Body of pancreas (tissue), 4 donors: ENCODE measurements at regions of chr11 and their contacts with region 1.

Region 1: DNA sequence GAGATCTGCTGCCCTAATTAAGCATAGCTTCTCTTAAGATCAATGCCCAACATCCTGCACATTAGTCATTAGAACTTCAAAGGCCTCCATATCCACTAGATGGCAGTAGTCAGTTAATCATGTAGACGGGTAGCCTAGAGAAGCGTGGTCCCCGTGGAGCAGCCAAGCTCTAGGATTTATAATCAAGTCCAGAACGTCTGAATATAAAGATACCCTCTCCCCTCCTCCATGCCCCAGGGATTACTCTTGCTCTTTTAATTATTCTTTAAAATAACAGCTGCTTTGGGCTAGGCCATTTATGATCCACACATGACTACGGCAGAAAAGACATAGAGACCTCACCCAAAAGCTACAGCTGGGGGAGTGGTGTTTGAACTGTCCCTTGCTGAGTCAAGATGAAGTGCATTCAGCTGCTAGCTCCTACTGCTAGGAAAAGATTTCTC is 327.6 kb upstream of the PLET1 start:
- DNase-seq: peak; percentile 49 to 76 (median 66)
- ATAC-seq: peak; percentile 92
- H3K4me3 ChIP-seq: no peak overlapping the region
- H3K27ac ChIP-seq: no peak overlapping the region
- H3K4me1 ChIP-seq: no peaks in the 10 kb centered on the region
- H3K27me3 ChIP-seq: no peaks in the 10 kb centered on the region
- CTCF ChIP-seq: peak; percentile 40 to 76 (median 68)
- POLR2A ChIP-seq: no peak

Region 2: DNA sequence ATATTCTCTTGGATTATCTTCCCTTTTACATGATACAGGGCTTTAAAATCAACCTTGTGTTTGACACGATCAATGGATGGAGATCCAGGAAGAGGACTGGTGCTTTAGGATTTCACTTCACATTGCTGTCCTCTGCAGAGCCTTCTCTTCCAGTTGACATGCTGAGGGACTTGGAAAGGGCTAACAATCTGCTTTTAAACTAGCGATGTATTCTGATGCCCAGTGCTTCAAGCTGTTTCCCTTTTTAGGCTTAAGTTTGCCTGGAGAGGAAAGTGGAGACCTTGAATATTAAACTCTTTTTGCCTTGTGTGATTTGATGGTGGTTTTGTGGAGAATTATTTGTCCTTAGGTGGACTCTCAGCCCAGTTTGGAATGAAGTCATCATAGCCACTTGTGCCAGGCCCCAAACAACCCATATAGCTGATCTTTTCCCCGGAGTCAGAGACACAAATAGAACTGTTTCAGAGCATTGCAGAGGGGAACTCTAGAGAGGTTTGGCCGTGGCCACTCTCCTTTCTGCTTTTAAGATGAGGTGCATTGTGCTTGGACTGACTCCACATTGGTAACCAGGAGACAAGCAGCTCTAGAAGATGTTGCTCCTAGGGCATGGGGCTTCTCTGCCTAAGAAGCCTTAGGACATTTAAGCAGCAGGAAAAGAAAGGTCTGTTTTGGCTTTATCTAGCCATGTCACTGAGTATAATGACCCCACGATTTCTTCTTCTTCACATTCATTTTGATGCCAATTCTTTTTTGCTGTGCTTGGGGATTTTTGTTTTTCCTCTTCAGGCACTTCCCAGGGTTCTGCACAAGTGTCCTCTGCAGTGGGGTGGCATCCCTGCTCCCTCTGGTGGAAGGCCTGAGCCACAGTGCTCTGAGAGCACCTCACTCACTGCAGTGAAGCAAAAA is 525.8 kb after region 1 on chr11:
- intact Hi-C with region 1: loop called (anchors 10 kb)
- DNase-seq: peak; percentile 32 to 64 (median 61)
- ATAC-seq: peak; percentile 71
- H3K4me3 ChIP-seq: no peak overlapping the region
- H3K27ac ChIP-seq: no peak overlapping the region
- H3K4me1 ChIP-seq: no peaks in the 10 kb centered on the region
- H3K27me3 ChIP-seq: no peaks in the 10 kb centered on the region
- CTCF ChIP-seq: peak; percentile 36 to 70 (median 60)
- POLR2A ChIP-seq: no peak